ENCODE measurements at regions of chr6 and their contacts with region 1.

Region 1: DNA sequence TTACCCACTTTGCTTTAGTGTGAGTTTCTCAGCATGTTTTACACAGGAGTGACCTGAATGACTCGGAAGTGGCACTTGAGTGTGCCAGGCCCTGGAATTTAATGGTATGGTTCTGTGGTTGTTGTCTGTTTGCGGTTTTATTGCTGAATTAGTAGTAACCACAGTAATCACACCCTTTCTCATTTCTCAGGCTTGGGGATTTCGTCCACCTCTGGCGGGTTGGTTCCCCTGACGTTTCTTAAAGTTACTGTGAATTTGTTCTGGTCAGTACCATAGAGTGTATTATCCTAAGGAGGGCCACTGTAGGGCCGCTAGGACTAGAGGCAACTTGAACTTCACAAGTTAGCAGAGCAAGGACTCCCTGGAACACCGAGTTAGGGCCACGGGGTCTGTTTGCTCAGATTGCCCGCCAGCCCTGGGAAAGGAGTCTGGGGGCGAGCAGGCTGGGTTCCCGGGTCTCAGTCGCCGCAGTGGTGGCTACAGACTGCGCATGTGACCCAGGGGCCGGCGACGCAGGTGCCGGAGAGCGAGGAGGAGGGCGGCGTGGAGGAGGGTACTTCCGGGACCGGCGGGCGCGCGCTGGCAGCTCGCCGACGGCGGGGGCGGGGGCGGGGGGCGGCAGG is 546 bp upstream of the KLHL32 start:
- DNase-seq: peak in 5 of 14 experiments; percentile 0 to 74 (median 2)
- ATAC-seq: no peak
- H3K4me3 ChIP-seq: peak overlapping the region; percentile 72
- H3K4me3 Mint-ChIP-seq: peak overlapping the region; percentile 93
- H3K27ac ChIP-seq: peak overlapping the region; percentile 93 to 96
- H3K27ac Mint-ChIP-seq: peak overlapping the region; percentile 98
- H3K4me1 ChIP-seq: peaks cover 17% of the 10 kb centered on the region
- H3K4me1 Mint-ChIP-seq: peaks cover 35% of the 10 kb centered on the region
- H3K27me3 ChIP-seq: no peaks in the 10 kb centered on the region
- H3K27me3 Mint-ChIP-seq: no peaks in the 10 kb centered on the region
- CTCF ChIP-seq: no peak

Region 2: DNA sequence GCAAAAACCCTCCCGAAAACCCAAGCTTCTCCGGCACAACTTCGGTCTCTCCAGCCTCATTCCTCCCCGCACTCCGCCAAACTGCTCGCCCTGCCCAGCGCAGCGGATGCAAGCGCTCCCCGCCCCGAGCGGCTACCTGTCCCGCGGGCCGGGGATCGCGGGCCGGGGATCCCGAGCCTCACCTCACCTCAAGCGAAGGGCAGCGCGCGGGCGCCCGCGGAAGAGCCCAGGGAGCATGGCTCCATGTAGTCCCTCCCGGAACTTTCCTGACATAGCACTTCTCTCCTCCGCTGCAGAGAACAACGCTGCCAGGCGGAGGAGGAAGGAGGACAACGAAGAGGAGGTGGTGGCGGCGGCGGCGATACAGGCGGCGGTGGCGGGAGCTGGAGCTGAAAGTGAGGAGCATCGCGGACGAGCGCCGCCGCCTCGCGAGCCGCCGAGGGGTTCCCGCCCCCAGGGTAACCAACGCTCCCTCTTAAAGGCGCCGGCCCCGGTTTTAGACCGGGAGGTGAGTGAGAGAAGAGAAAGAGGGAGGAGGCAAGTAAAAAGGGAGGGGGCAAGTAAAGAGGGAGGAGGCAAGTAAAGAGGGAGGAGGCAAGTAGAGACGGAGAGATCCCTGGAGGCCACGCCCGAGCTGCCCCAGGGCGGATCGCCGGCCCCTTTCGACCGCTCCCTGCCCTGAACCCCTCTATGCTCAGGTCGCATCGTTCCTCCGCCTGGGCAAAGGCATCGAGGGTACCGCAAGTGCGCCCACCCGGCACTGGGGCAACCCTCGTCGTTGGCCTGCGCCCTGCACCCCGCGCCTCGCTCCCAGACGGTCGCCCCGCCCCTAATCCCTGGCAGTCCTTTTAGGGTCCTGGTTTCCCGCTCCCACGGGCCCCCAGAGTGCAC is 86.7 kb before region 1 on chr6 and contains the start of gene GPR63:
- CTCF ChIA-PET with region 1: no interaction called
- POLR2A ChIA-PET with region 1: interaction called, 10 read pairs
- intact Hi-C with region 1: loop called (anchors 2 to 5 kb)
- DNase-seq: peak; percentile 27 to 82 (median 52)
- ATAC-seq: peak; percentile 87
- H3K4me3 ChIP-seq: peak within 1 kb of the TSS; percentile 72
- H3K4me3 Mint-ChIP-seq: peak within 1 kb of the TSS; percentile 92
- H3K27ac ChIP-seq: no peak within 1 kb of the TSS
- H3K27ac Mint-ChIP-seq: no peak within 1 kb of the TSS
- H3K4me1 ChIP-seq: peaks cover 19% of the 10 kb centered on the region
- H3K4me1 Mint-ChIP-seq: peaks cover 24% of the 10 kb centered on the region
- H3K27me3 ChIP-seq: peaks cover 0 to 22% of the 10 kb centered on the region in 2 experiments
- H3K27me3 Mint-ChIP-seq: peaks cover 50% of the 10 kb centered on the region
- CTCF ChIP-seq: no peak
- total RNA-seq, gene GPR63: 0.20 to 0.25 TPM

Region 3: DNA sequence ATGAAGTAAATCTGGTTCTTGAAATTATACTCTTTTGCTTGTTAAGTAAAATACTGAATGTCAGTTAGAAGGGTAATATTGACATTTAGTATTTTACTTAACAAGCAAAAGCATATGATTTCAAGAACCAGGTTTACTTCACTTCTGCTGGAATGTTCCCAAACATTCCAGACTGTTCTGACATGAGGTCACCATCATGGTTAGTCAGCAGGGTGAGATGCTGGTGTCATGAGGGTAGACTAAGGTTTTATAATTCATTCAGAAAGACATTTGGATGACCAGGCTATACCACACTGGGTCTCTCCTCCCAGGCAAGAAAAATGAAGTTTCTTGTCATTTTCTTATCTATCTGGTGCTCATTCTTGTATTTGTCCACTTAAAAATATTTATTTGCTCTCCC is 773.5 kb after region 1 on chr6:
- CTCF ChIA-PET with region 1: no interaction called
- POLR2A ChIA-PET with region 1: no interaction called
- intact Hi-C with region 1: no loop called
- DNase-seq: no peak
- ATAC-seq: no peak
- H3K4me3 ChIP-seq: no peak overlapping the region
- H3K4me3 Mint-ChIP-seq: no peak overlapping the region
- H3K27ac ChIP-seq: no peak overlapping the region
- H3K27ac Mint-ChIP-seq: no peak overlapping the region
- H3K4me1 ChIP-seq: no peaks in the 10 kb centered on the region
- H3K4me1 Mint-ChIP-seq: no peaks in the 10 kb centered on the region
- H3K27me3 ChIP-seq: no peaks in the 10 kb centered on the region
- H3K27me3 Mint-ChIP-seq: no peaks in the 10 kb centered on the region
- CTCF ChIP-seq: no peak